Activated CD4-positive, alpha-beta memory T cell treated with anti-CD3 and anti-CD28 coated beads for 36 hours (primary cell): ENCODE measurements at regions of chr11 and their contacts with region 1.

Region 1: GRCh38 chr11:58513747-58514367 is 6.0 kb upstream of the OR5B21 start:
- DNase-seq: peak; percentile 21
- H3K4me3 Mint-ChIP-seq: no peak overlapping the region
- H3K27ac Mint-ChIP-seq: no peak overlapping the region
- H3K4me1 Mint-ChIP-seq: peaks cover 4% of the 10 kb centered on the region
- H3K27me3 Mint-ChIP-seq: no peaks in the 10 kb centered on the region

Region 2: GRCh38 chr11:57680552-57680874 is 833.3 kb before region 1 on chr11:
- CTCF ChIA-PET with region 1: no interaction called
- POLR2A ChIA-PET with region 1: no interaction called
- intact Hi-C with region 1: loop called (anchors 5 kb)
- DNase-seq: no peak
- H3K4me3 Mint-ChIP-seq: no peak overlapping the region
- H3K27ac Mint-ChIP-seq: peak overlapping the region; percentile 82
- H3K4me1 Mint-ChIP-seq: peaks cover 55% of the 10 kb centered on the region
- H3K27me3 Mint-ChIP-seq: no peaks in the 10 kb centered on the region

Region 3: GRCh38 chr11:58880625-58881024 is 366.8 kb after region 1 on chr11:
- CTCF ChIA-PET with region 1: no interaction called
- POLR2A ChIA-PET with region 1: no interaction called
- intact Hi-C with region 1: no loop called
- DNase-seq: no peak
- H3K4me3 Mint-ChIP-seq: no peak overlapping the region
- H3K27ac Mint-ChIP-seq: no peak overlapping the region
- H3K4me1 Mint-ChIP-seq: no peaks in the 10 kb centered on the region
- H3K27me3 Mint-ChIP-seq: peaks cover 9% of the 10 kb centered on the region